ENCODE measurements at regions of chr12 and their contacts with region 1.

Region 1: DNA sequence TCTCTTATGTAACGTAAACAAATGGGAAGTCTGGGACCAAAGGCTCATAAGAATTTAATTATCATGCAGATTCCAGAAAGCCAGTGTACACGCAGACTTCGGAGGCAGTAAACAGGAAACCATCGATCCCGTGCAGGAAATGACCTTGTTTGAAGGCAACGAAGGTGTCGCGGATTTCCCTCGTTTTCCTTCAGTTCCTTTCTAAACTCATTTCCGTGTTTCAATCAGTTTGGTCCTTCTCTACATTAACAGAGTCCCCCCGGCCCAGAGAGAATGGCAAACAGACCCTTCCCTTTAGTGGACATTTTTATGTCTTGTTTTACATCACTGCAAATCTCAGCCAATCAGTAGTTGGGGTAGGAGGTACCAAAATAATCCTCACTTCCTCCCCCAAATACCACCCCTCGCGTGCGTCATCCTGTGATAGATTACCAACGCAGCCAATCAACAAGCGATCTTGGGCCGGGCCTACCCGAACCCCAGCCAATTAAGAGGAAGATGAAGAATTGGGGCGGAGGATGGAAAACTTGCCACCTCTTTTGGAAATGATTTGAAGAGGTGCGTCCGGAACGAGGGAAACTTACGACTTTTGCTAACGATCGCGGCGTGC is 6.1 kb upstream of the FOXJ2 start:
- DNase-seq: peak; percentile 98
- ATAC-seq: peak; percentile 95
- H3K4me3 ChIP-seq: peak overlapping the region; percentile 92 to 99 (median 98)
- H3K4me3 Mint-ChIP-seq: peak overlapping the region; percentile 97
- H3K27ac ChIP-seq: peak overlapping the region; percentile 99 to 100
- H3K27ac Mint-ChIP-seq: peak overlapping the region; percentile 100
- H3K4me1 ChIP-seq: peaks cover 4 to 8% of the 10 kb centered on the region in 2 donors
- H3K4me1 Mint-ChIP-seq: peaks cover 11% of the 10 kb centered on the region
- H3K27me3 ChIP-seq: no peaks in the 10 kb centered on the region
- H3K27me3 Mint-ChIP-seq: no peaks in the 10 kb centered on the region
- CTCF ChIP-seq: no peak

Region 2: DNA sequence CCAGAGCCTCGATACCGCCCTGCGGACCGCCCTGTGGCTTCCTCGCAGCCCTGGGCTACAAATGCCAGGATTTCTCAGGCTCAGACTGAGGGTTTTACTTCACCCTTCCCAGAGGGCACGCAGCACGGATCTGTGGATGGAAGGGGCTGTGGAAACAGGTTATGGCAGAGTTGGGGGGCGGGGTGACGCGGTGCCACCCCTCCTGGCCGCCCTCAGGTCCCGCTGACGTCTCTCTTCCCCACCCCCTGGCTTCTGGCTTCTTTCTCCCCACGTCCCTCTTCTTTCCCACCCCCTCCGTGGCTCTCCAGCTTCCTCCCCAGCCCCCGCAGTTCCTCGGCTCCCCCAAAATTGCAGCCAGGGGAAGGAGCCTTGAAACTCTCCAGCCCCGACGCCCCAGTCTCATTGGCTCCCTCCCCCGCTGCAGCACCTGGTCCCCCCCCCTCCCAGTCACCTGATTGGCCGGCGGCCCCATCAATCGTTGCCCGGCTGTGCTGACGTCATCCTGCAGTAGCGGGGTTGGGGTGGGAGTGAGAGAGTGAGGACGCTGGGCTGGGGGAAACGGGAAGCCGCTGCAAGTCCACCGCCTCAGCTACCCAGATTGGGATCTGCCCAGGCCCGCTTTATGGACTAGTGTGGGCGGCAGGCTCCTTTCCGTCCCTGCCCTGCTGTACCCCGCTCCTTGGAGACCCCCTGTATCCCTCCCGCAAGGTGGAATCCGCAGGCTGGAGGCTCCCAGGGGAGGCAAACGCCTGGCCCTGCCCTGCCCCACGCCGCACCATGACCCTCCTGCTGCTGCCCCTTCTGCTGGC is 896.3 kb before region 1 on chr12 and contains the start of gene CLSTN3:
- CTCF ChIA-PET with region 1: no interaction called
- POLR2A ChIA-PET with region 1: no interaction called
- intact Hi-C with region 1: loop called (anchors 2 kb)
- DNase-seq: peak; percentile 91
- ATAC-seq: peak; percentile 90
- H3K4me3 ChIP-seq: peak within 1 kb of the TSS; percentile 53 to 92 (median 75)
- H3K4me3 Mint-ChIP-seq: peak within 1 kb of the TSS; percentile 98
- H3K27ac ChIP-seq: peak within 1 kb of the TSS; percentile 10 to 54
- H3K27ac Mint-ChIP-seq: peak within 1 kb of the TSS; percentile 87
- H3K4me1 ChIP-seq: peaks cover 16 to 26% of the 10 kb centered on the region in 2 donors
- H3K4me1 Mint-ChIP-seq: peaks cover 30% of the 10 kb centered on the region
- H3K27me3 ChIP-seq: no peaks in the 10 kb centered on the region
- H3K27me3 Mint-ChIP-seq: no peaks in the 10 kb centered on the region
- CTCF ChIP-seq: no peak
- total RNA-seq, gene CLSTN3: 36.5 and 41.2 TPM in 2 replicates

Region 3: GRCh38 chr12:7656121-7656520 is 370.3 kb before region 1 on chr12:
- CTCF ChIA-PET with region 1: no interaction called
- POLR2A ChIA-PET with region 1: no interaction called
- intact Hi-C with region 1: no loop called
- DNase-seq: no peak
- ATAC-seq: no peak
- H3K4me3 ChIP-seq: no peak overlapping the region
- H3K4me3 Mint-ChIP-seq: no peak overlapping the region
- H3K27ac ChIP-seq: no peak overlapping the region
- H3K27ac Mint-ChIP-seq: no peak overlapping the region
- H3K4me1 ChIP-seq: peaks cover 4 to 12% of the 10 kb centered on the region in 2 donors
- H3K4me1 Mint-ChIP-seq: peaks cover 12% of the 10 kb centered on the region
- H3K27me3 ChIP-seq: no peaks in the 10 kb centered on the region
- H3K27me3 Mint-ChIP-seq: peaks cover 9% of the 10 kb centered on the region
- CTCF ChIP-seq: no peak

Region 4: DNA sequence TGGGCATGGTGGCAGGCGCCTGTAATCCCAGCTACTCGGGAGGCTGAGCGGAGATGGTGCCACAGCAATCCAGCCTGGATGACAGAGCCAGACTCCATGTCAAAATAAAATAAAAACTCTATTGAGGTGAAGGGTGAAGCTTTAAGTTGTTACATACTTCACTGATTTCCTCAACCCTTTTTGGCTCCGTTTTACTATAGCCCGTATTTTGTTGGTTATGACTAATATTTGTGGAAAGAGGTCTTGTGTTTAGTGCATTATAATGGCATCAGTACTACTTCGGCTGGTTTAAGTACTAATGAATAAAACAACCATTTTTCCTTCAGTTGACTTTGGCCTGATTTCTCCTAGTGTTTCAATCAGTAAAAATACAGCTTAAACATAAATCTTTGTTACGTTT is 126.6 kb before region 1 on chr12:
- CTCF ChIA-PET with region 1: no interaction called
- POLR2A ChIA-PET with region 1: no interaction called
- intact Hi-C with region 1: no loop called
- DNase-seq: no peak
- ATAC-seq: no peak
- H3K4me3 ChIP-seq: no peak overlapping the region
- H3K4me3 Mint-ChIP-seq: no peak overlapping the region
- H3K27ac ChIP-seq: no peak overlapping the region
- H3K27ac Mint-ChIP-seq: no peak overlapping the region
- H3K4me1 ChIP-seq: no peaks in the 10 kb centered on the region
- H3K4me1 Mint-ChIP-seq: no peaks in the 10 kb centered on the region
- H3K27me3 ChIP-seq: no peaks in the 10 kb centered on the region
- H3K27me3 Mint-ChIP-seq: no peaks in the 10 kb centered on the region
- CTCF ChIP-seq: no peak

Region 5: GRCh38 chr12:7970475-7971252 is 55.7 kb before region 1 on chr12:
- CTCF ChIA-PET with region 1: no interaction called
- POLR2A ChIA-PET with region 1: no interaction called
- intact Hi-C with region 1: loop called (anchors 2 kb)
- DNase-seq: peak; percentile 90
- ATAC-seq: peak; percentile 90
- H3K4me3 ChIP-seq: peak overlapping the region; percentile 65 to 94 (median 74)
- H3K4me3 Mint-ChIP-seq: peak overlapping the region; percentile 88
- H3K27ac ChIP-seq: peak overlapping the region; percentile 91 to 96
- H3K27ac Mint-ChIP-seq: peak overlapping the region; percentile 93
- H3K4me1 ChIP-seq: peaks cover 26 to 35% of the 10 kb centered on the region in 2 donors
- H3K4me1 Mint-ChIP-seq: peaks cover 26% of the 10 kb centered on the region
- H3K27me3 ChIP-seq: no peaks in the 10 kb centered on the region
- H3K27me3 Mint-ChIP-seq: no peaks in the 10 kb centered on the region
- CTCF ChIP-seq: peak; percentile 24

Region 6: GRCh38 chr12:8045952-8046944 is 19.9 kb after region 1 on chr12:
- CTCF ChIA-PET with region 1: interaction called, 12 read pairs
- POLR2A ChIA-PET with region 1: no interaction called
- intact Hi-C with region 1: no loop called
- DNase-seq: peak; percentile 79
- ATAC-seq: peak; percentile 64
- H3K4me3 ChIP-seq: no peak overlapping the region
- H3K4me3 Mint-ChIP-seq: no peak overlapping the region
- H3K27ac ChIP-seq: no peak overlapping the region
- H3K27ac Mint-ChIP-seq: no peak overlapping the region
- H3K4me1 ChIP-seq: peaks cover 6 to 10% of the 10 kb centered on the region in 2 donors
- H3K4me1 Mint-ChIP-seq: peaks cover 16% of the 10 kb centered on the region
- H3K27me3 ChIP-seq: no peaks in the 10 kb centered on the region
- H3K27me3 Mint-ChIP-seq: no peaks in the 10 kb centered on the region
- CTCF ChIP-seq: peak; percentile 96